AG04449 (cell line): ENCODE measurements at regions of chr6 and their contacts with region 1.

Region 1: GRCh38 chr6:159008656-159009288 is 8.8 kb upstream of the RSPH3 start:
- DNase-seq: no peak
- H3K4me3 ChIP-seq: no peak overlapping the region
- CTCF ChIP-seq: peak; percentile 29

Region 2: DNA sequence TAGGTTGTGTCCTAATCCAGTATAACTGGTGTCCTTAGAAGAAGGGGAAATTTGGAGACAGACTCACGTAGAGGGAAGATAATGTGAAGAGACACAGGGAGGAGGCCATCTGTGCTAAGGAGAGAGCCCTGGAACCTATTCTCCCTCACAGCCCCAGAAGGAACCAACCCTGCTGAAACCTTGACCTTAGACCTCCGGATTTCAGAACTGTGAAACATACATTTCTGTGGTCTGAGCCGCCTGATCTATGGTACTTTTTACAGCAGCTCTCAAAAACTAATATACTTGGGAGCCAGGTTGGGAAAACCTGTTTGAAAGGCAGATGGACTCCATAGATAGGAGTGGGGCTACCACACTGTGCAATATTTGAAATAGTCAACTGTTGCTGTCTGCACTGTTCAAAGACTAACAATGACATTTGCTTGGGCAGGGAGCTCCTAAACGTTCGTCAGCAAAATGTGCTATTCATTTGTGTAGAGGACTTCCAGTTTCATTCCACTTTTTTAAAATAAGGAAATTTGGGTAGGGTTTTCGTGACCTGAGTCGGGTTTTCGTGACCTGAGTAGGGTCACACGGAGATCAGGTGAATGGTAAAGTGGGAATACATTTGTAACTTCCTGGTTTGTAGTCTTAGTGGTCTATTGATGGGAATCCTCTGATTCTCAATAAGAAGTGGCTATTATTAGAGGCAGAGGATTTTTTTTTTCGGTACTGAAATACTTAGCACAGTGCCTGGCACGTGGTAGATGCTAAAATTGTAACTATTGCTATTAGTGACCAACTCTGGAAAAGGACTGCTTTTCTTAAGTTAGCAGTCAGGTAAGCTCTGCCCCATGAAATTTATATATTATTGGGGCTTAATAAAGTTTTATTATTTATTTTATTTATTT is 24.6 kb after region 1 on chr6:
- CTCF ChIA-PET with region 1: interaction called, 12 read pairs
- POLR2A ChIA-PET with region 1: no interaction called
- DNase-seq: no peak
- H3K4me3 ChIP-seq: no peak overlapping the region
- CTCF ChIP-seq: no peak

Region 3: GRCh38 chr6:159104163-159104925 is 95.6 kb after region 1 on chr6:
- CTCF ChIA-PET with region 1: interaction called, 129 read pairs
- POLR2A ChIA-PET with region 1: no interaction called
- DNase-seq: no peak
- H3K4me3 ChIP-seq: no peak overlapping the region
- CTCF ChIP-seq: peak; percentile 92

Region 4: GRCh38 chr6:159110013-159110412 is 101.2 kb after region 1 on chr6:
- CTCF ChIA-PET with region 1: interaction called, 129 read pairs
- POLR2A ChIA-PET with region 1: no interaction called
- DNase-seq: no peak
- H3K4me3 ChIP-seq: no peak overlapping the region
- CTCF ChIP-seq: peak; percentile 24